Aorta (tissue), 5 donors: ENCODE measurements at regions of chr18 and their contacts with region 1.

Region 1: GRCh38 chr18:22485808-22486244 is 68.1 kb upstream of the CTAGE1 start:
- DNase-seq: no peak
- ATAC-seq: no peak
- H3K4me3 ChIP-seq: no peak overlapping the region
- H3K27ac ChIP-seq: no peak overlapping the region
- H3K4me1 ChIP-seq: peaks cover 4 to 6% of the 10 kb centered on the region in 2 donors
- H3K27me3 ChIP-seq: no peaks in the 10 kb centered on the region

Region 2: DNA sequence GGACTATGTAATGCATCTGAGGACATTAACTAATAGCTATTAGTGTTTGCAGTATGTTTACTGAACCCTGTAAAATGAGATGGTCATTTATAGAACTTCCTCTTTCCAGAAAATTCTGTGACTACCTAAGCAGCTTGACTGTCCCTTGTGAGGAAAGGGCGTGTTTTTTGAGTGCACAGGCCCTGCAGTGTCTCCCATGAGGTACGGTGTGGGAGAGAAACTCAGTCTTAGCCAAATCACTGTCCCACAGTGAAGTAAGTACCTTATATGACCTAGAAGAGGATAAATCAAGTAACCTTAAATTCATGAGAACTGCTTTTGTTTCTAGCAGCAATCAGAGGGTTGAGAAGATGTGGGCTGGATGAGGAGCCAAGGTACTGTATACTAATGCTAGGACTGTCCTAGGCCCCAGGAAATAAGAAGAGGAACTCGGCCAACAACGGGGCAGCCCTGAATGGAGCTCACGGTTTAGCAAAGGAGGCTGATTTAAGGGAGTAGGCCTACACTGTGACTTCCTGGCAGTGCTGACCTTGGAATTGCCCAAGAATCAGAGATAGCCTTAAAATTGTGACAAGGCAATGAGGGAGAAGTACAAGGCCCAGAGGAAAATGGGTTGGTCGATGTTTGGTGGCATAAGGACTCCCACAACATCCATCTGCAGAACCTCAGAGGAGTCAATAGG is 35.3 kb after region 1 on chr18:
- intact Hi-C with region 1: loop called in 1 of 2 experiments (anchors 5 kb)
- DNase-seq: no peak
- ATAC-seq: no peak
- H3K4me3 ChIP-seq: no peak overlapping the region
- H3K27ac ChIP-seq: no peak overlapping the region
- H3K4me1 ChIP-seq: no peaks in the 10 kb centered on the region
- H3K27me3 ChIP-seq: no peaks in the 10 kb centered on the region

Region 3: GRCh38 chr18:22572341-22572740 is 86.5 kb after region 1 on chr18:
- intact Hi-C with region 1: no loop called
- DNase-seq: no peak
- ATAC-seq: no peak
- H3K4me3 ChIP-seq: no peak overlapping the region
- H3K27ac ChIP-seq: no peak overlapping the region
- H3K4me1 ChIP-seq: no peaks in the 10 kb centered on the region
- H3K27me3 ChIP-seq: no peaks in the 10 kb centered on the region